CD8-positive, alpha-beta T cell (primary cell): ENCODE measurements at regions of chr4 and their contacts with region 1.

Region 1: DNA sequence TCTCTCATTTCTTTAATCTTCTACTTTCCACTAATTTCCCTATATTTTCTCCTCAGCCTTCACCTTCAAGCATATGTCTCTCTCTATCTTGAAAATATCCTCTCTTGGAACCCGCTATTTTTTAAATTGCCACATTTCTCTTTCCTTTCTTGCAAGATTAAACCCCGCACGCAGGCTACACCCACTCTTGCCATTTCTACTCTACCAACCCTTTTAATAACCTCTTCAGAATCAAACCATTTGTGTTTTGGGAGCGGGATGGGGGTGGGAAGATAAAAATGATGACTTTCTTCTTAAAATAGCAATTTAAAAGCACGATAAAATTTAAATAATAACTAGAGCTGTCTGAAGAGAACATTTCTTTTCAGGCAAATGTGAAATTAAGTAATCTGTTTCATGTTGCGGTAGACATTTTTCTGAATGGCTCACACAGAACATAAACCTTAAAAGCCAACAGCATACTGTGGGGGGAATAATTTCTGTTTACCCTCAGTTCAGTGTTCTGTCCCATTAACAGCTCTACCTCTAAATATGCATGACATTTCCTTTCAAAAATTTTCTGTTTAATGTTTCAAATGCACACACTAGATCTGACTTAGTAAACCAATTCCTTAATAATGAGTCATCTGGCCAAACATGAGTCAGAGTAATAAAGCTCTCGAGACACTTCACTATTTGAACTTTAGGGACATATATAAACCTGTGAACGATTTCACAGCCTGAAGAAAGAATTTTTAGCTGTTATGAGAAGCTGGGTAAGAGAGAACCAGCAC is 20.5 kb downstream of the ARSJ start:
- DNase-seq: no peak
- ATAC-seq: no peak
- H3K4me3 ChIP-seq: no peak overlapping the region
- H3K4me3 Mint-ChIP-seq: no peak overlapping the region
- H3K27ac ChIP-seq: no peak overlapping the region
- H3K27ac Mint-ChIP-seq: no peak overlapping the region
- H3K4me1 ChIP-seq: no peaks in the 10 kb centered on the region
- H3K4me1 Mint-ChIP-seq: no peaks in the 10 kb centered on the region
- H3K27me3 ChIP-seq: no peaks in the 10 kb centered on the region
- H3K27me3 Mint-ChIP-seq: no peaks in the 10 kb centered on the region
- CTCF ChIP-seq: no peak

Region 2: DNA sequence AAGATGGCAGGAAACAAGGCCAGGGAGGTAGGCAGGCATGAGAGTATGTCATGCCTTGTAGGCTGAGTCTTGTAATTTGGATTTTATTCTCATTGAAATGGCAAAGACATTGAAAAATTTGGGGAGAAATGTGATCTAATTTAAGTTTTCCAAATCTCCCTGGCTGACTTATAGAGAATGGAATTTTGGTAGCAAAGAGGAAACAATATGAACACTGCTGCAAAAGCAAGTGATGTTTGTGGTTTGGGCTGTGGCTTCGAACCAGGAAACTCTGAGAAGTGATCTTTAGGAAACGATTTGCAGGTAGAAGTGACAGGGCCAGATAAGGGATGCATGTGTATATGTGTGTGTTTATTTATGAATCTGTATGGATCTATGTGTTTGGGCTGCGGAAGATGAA is 15.1 kb before region 1 on chr4:
- CTCF ChIA-PET with region 1: interaction called, 4 read pairs
- POLR2A ChIA-PET with region 1: no interaction called
- intact Hi-C with region 1: loop called in 1 of 2 experiments (anchors 1 kb)
- DNase-seq: peak in 2 of 9 experiments; percentile 18 to 23
- ATAC-seq: no peak
- H3K4me3 ChIP-seq: no peak overlapping the region
- H3K4me3 Mint-ChIP-seq: no peak overlapping the region
- H3K27ac ChIP-seq: no peak overlapping the region
- H3K27ac Mint-ChIP-seq: no peak overlapping the region
- H3K4me1 ChIP-seq: peaks cover 9% of the 10 kb centered on the region
- H3K4me1 Mint-ChIP-seq: peaks cover 13% of the 10 kb centered on the region
- H3K27me3 ChIP-seq: no peaks in the 10 kb centered on the region
- H3K27me3 Mint-ChIP-seq: no peaks in the 10 kb centered on the region
- CTCF ChIP-seq: no peak

Region 3: GRCh38 chr4:114642173-114642780 is 683.3 kb after region 1 on chr4:
- CTCF ChIA-PET with region 1: no interaction called
- POLR2A ChIA-PET with region 1: no interaction called
- intact Hi-C with region 1: no loop called
- DNase-seq: no peak
- ATAC-seq: no peak
- H3K4me3 ChIP-seq: no peak overlapping the region
- H3K4me3 Mint-ChIP-seq: no peak overlapping the region
- H3K27ac ChIP-seq: no peak overlapping the region
- H3K27ac Mint-ChIP-seq: no peak overlapping the region
- H3K4me1 ChIP-seq: no peaks in the 10 kb centered on the region
- H3K4me1 Mint-ChIP-seq: no peaks in the 10 kb centered on the region
- H3K27me3 ChIP-seq: no peaks in the 10 kb centered on the region
- H3K27me3 Mint-ChIP-seq: no peaks in the 10 kb centered on the region
- CTCF ChIP-seq: no peak